ENCODE measurements at regions of chr14 and their contacts with region 1.

Region 1: GRCh38 chr14:55051426-55052268 is at the start of gene MAPK1IP1L:
- DNase-seq: peak; percentile 88
- ATAC-seq: peak; percentile 96
- H3K4me3 ChIP-seq: peak within 1 kb of the TSS; percentile 79
- H3K27ac ChIP-seq: peak within 1 kb of the TSS; percentile 95
- H3K4me1 ChIP-seq: no peaks in the 10 kb centered on the region
- H3K27me3 ChIP-seq: no peaks in the 10 kb centered on the region
- CTCF ChIP-seq: peak; percentile 99
- POLR2A ChIP-seq: peak; percentile 98
- RAD21 ChIP-seq: peak; percentile 67
- total RNA-seq, gene MAPK1IP1L: 37.2 and 44.8 TPM in 2 replicates

Region 2: DNA sequence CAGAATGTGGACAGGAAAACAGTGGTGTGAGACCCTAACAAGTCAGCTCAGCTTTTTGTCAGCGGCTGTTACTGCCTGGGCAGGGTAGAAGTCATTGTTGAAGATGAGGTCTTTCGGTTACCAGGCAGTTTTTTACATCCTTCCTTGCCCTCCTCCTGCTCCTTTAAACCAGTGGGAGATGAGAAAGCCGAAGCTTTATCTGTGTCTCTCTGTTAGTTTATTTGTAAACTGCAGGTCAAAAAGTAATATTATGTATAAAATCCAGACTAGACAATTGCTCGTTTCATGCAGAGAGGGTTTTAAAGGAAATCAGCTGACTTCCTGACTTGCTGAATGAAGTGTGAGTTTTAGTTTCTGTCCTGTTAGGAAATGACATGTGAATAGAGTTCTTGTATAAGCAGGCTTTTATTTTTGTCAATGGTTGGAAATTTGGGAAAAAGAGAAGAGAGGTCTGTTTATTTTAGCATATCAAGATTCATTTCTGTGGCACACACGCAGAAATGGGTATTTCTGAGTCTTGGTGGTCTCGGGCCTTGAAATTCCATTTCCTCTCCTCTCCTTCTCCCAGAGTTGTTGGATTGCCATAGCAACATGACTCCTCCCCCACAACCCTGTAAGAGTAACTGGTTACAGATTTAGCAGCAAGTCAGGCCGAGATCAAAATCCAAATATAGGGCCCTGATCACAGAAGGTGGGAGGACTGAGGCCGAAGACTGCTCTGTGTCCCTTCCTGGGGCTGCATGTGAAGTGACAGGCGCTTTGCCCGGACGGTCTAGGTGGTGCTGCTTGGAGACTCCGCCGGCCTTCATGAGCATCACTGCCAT is 423.9 kb before region 1 on chr14:
- CTCF ChIA-PET with region 1: no interaction called
- POLR2A ChIA-PET with region 1: no interaction called
- dilution Hi-C with region 1: no loop called
- in situ Hi-C with region 1: no loop called
- intact Hi-C with region 1: no loop called
- DNase-seq: peak; percentile 69
- ATAC-seq: peak; percentile 51
- H3K4me3 ChIP-seq: no peak overlapping the region
- H3K27ac ChIP-seq: peak overlapping the region; percentile 97
- H3K4me1 ChIP-seq: peaks cover 26% of the 10 kb centered on the region
- H3K27me3 ChIP-seq: no peaks in the 10 kb centered on the region
- CTCF ChIP-seq: no peak
- POLR2A ChIP-seq: no peak
- RAD21 ChIP-seq: no peak

Region 3: DNA sequence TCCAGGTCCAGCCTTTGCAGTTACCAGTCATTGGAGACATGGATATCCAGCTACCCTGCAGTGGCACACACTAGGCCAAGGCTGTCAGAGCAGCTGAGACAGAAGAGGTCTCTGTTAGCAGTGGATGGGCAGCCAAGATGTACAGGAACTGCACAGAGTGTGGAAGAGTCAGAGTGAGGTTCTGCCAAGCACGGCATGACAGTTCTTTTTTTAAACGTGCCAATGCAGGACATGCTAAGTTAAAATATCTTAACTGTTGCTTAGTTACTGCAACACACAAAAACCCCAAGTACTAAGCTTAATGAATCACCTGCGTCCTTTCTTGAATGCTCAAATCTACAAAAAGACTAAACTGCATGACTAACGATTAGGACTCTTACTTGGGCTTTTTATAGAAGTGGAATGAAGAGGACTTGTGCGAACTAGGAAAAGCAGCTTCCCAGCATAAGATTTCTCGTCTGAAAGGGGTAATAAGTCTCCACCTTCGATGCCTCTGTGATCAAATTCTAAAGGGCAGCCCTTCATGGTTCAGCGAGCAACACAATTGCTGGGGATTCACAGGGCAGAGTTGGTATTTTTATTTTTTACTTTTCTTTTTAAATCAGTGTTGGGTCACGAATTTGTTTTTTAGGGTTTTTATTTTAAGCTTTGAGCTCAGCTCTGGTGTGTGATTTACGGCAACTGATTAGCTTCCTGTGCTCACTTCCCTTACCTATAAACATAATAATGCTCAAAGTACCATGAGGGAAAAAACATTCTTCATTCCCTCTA is 20.4 kb after region 1 on chr14:
- CTCF ChIA-PET with region 1: interaction called, 10 read pairs
- POLR2A ChIA-PET with region 1: interaction called, 3 read pairs
- dilution Hi-C with region 1: no loop called
- in situ Hi-C with region 1: no loop called
- intact Hi-C with region 1: no loop called
- DNase-seq: peak; percentile 94
- ATAC-seq: peak; percentile 47
- H3K4me3 ChIP-seq: no peak overlapping the region
- H3K27ac ChIP-seq: peak overlapping the region; percentile 64
- H3K4me1 ChIP-seq: peaks cover 15% of the 10 kb centered on the region
- H3K27me3 ChIP-seq: no peaks in the 10 kb centered on the region
- CTCF ChIP-seq: no peak
- POLR2A ChIP-seq: peak; percentile 47; the same call in 1 of the 2 replicates
- RAD21 ChIP-seq: no peak

Region 4: GRCh38 chr14:55347040-55347439 is 295.4 kb after region 1 on chr14:
- CTCF ChIA-PET with region 1: no interaction called
- POLR2A ChIA-PET with region 1: interaction called, 10 read pairs
- dilution Hi-C with region 1: no loop called
- in situ Hi-C with region 1: no loop called
- intact Hi-C with region 1: no loop called
- DNase-seq: no peak
- ATAC-seq: no peak
- H3K4me3 ChIP-seq: no peak overlapping the region
- H3K27ac ChIP-seq: no peak overlapping the region
- H3K4me1 ChIP-seq: no peaks in the 10 kb centered on the region
- H3K27me3 ChIP-seq: no peaks in the 10 kb centered on the region
- CTCF ChIP-seq: no peak
- POLR2A ChIP-seq: no peak
- RAD21 ChIP-seq: no peak

Measured in IMR-90 (cell line).